Breast epithelium (tissue), 4 donors: ENCODE measurements at regions of chr11 and their contacts with region 1.

Region 1: DNA sequence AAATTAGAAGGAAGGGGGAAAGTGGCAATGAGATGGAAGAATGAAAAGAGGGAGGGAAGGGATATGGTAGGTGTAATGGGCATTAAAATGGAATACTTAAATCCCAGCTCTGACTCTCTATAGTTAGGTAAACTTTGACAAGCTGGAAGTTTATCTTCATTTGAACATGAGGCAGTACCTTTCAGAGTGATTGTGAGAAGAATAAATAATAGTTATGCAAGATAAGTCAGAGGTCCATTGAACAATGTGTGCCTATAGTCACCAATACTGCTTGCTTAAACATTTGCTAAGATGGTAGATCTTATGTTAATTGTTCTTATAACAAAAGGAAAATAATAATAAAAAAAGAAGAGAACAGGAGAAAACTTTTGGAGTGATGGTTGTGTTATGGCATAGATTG is 545.8 kb upstream of the CCDC90B start:
- DNase-seq: no peak
- H3K4me3 ChIP-seq: no peak overlapping the region
- H3K27ac ChIP-seq: no peak overlapping the region
- H3K4me1 ChIP-seq: no peaks in the 10 kb centered on the region
- H3K27me3 ChIP-seq: no peaks in the 10 kb centered on the region
- CTCF ChIP-seq: no peak
- POLR2A ChIP-seq: no peak

Region 2: DNA sequence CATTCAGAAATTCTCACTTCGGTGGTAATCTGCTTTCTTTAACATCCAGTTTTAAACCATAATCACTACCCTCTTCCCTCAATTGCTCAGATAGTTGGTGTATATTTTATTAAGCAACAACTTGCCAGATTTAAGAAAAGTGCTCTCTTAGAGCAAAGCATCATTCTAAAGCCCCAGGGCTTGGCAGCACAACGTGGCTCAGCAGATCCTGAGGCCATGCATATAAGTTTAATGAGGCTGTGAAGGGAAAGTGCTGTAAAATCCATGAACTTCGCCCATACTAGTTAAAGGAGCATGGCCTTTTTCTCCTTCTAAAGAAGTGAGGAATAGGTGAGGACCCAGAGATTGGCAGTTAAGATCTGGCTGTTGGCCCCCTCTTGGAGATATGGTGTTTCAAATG is 63.4 kb before region 1 on chr11:
- intact Hi-C with region 1: loop called (anchors 2 kb)
- DNase-seq: no peak
- H3K4me3 ChIP-seq: no peak overlapping the region
- H3K27ac ChIP-seq: no peak overlapping the region
- H3K4me1 ChIP-seq: no peaks in the 10 kb centered on the region
- H3K27me3 ChIP-seq: no peaks in the 10 kb centered on the region
- CTCF ChIP-seq: no peak
- POLR2A ChIP-seq: no peak